Naive thymus-derived CD4-positive, alpha-beta T cell (primary cell): ENCODE measurements at regions of chr13 and their contacts with region 1.

Region 1: GRCh38 chr13:81017513-81018152 is 676.7 kb upstream of the SPRY2 start:
- DNase-seq: peak in 2 of 9 donors; percentile 1 to 14
- ATAC-seq: no peak
- H3K4me3 ChIP-seq: no peak overlapping the region
- H3K4me3 Mint-ChIP-seq: no peak overlapping the region
- H3K27ac ChIP-seq: no peak overlapping the region
- H3K27ac Mint-ChIP-seq: no peak overlapping the region
- H3K4me1 ChIP-seq: no peaks in the 10 kb centered on the region
- H3K4me1 Mint-ChIP-seq: no peaks in the 10 kb centered on the region
- H3K27me3 ChIP-seq: no peaks in the 10 kb centered on the region
- H3K27me3 Mint-ChIP-seq: no peaks in the 10 kb centered on the region

Region 2: DNA sequence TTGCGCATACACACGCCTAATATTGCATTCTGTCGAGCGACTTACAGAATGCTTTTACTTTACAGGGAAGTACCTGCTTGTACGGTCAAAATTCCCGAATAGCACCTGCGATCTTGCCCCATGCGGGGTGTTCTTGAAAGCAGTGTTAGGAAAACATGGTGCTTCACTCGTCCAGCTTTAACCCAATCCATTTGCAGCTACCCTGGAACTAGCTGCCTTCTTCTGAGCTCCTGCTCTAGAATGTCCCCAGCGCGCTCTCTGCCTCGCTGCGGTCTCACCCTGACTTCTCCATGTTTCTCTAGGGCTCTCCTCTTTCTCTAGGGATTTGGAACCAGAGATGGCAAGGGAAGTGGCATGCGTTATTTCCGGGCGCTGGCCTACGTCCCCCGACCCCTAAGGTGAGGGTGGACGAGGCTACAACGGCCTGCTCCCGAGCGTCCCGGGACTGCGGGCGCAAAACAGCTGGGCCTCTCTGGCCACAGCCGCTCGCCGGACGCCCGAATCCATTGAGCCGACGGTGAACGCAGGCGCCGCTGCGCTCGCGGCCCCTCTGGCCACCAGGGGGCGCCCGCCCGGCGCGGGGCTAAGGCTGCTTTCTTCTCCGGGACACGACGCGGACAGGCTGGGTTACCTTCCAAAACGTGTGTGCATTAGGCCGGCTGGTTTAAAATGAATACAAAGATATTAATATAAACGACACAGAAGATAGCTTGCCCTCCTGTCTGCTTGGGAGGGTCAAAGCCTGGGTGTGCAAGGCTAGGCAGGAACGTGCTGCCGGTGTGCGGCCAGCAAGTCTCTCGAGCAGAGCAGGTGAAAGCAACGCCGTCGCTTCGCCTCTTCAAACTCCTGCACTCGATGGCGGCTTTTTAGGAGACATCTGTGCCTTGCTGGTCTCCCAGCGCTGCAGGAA is 674.9 kb before region 1 on chr13:
- CTCF ChIA-PET with region 1: no interaction called
- POLR2A ChIA-PET with region 1: no interaction called
- intact Hi-C with region 1: loop called in 1 of 2 experiments (anchors 5 kb)
- DNase-seq: peak in 8 of 9 donors; percentile 33 to 83 (median 66)
- ATAC-seq: peak; percentile 79
- H3K4me3 ChIP-seq: peak overlapping the region; percentile 61
- H3K4me3 Mint-ChIP-seq: peak overlapping the region in 7 of 10 donors; percentile 49 to 90 (median 83)
- H3K27ac ChIP-seq: no peak overlapping the region
- H3K27ac Mint-ChIP-seq: peak overlapping the region in 1 of 9 donors; percentile 9
- H3K4me1 ChIP-seq: peaks cover 5 to 11% of the 10 kb centered on the region in 2 donors
- H3K4me1 Mint-ChIP-seq: peaks cover 13 to 28% (median 25%) of the 10 kb centered on the region in 7 donors
- H3K27me3 ChIP-seq: peaks cover 0 to 6% of the 10 kb centered on the region in 2 donors
- H3K27me3 Mint-ChIP-seq: peaks cover 26 to 48% (median 35%) of the 10 kb centered on the region in 5 donors

Region 3: DNA sequence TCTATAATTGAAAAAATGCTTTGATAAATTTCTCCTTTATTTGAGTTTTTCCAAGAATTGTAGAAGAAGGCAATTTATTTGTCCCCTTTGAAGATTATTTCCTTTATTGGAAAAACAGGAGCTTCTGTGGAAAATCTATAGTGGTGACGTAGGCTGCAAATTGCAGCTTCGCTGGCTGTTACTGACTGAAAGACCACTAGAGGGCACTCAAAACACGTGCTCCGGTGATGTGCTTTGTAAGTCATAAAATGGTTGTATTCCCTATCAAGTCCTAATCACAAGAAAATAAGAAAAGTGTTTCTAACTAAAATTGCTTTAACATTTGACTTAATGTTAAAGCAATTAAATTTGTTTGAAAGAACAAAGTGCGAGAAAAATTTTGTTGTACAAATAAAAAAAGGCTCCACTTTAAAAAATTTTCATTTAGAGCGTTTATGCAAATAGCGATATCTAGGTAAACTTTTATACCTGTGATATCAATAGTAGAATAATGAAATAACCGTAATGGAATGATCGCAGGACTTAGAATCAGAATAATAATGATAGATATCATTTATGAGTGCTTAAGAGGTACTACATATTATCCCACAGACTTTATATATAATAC is 38.5 kb before region 1 on chr13:
- CTCF ChIA-PET with region 1: no interaction called
- POLR2A ChIA-PET with region 1: no interaction called
- intact Hi-C with region 1: loop called in 1 of 2 experiments (anchors 1 kb)
- DNase-seq: peak in 2 of 9 donors; percentile 2 to 19
- ATAC-seq: no peak
- H3K4me3 ChIP-seq: no peak overlapping the region
- H3K4me3 Mint-ChIP-seq: no peak overlapping the region
- H3K27ac ChIP-seq: no peak overlapping the region
- H3K27ac Mint-ChIP-seq: no peak overlapping the region
- H3K4me1 ChIP-seq: no peaks in the 10 kb centered on the region
- H3K4me1 Mint-ChIP-seq: no peaks in the 10 kb centered on the region
- H3K27me3 ChIP-seq: no peaks in the 10 kb centered on the region
- H3K27me3 Mint-ChIP-seq: no peaks in the 10 kb centered on the region

Region 4: DNA sequence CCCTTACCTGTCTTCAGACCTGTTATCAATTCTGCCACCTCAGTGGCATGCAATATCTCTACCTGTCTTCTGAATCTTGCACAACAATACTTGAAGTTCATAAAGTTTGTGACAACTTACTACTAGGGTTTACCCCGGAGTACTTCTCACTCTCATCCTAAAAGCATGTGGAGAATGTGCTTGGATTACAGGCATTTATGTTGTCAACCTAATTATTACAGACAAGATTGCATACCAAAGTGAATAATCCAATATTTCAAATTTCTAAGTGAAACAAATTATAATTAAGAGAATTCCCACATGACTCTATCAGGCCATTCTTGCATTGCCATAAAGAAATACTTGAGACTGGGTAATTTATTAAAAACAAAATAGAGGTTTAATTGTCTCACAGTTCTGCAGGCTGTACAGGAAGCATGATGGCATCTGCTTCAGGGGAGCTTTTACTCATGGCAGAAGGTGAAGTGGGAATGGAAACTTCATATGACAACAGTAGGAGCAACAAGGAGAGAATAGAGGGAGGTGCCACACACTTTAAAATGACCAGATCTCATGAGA is 15.7 kb before region 1 on chr13:
- CTCF ChIA-PET with region 1: no interaction called
- POLR2A ChIA-PET with region 1: no interaction called
- intact Hi-C with region 1: no loop called
- DNase-seq: no peak
- ATAC-seq: no peak
- H3K4me3 ChIP-seq: no peak overlapping the region
- H3K4me3 Mint-ChIP-seq: no peak overlapping the region
- H3K27ac ChIP-seq: no peak overlapping the region
- H3K27ac Mint-ChIP-seq: no peak overlapping the region
- H3K4me1 ChIP-seq: no peaks in the 10 kb centered on the region
- H3K4me1 Mint-ChIP-seq: no peaks in the 10 kb centered on the region
- H3K27me3 ChIP-seq: no peaks in the 10 kb centered on the region
- H3K27me3 Mint-ChIP-seq: no peaks in the 10 kb centered on the region